WTC11 (cell line): ENCODE measurements at regions of chr2 and their contacts with region 1.

Region 1: DNA sequence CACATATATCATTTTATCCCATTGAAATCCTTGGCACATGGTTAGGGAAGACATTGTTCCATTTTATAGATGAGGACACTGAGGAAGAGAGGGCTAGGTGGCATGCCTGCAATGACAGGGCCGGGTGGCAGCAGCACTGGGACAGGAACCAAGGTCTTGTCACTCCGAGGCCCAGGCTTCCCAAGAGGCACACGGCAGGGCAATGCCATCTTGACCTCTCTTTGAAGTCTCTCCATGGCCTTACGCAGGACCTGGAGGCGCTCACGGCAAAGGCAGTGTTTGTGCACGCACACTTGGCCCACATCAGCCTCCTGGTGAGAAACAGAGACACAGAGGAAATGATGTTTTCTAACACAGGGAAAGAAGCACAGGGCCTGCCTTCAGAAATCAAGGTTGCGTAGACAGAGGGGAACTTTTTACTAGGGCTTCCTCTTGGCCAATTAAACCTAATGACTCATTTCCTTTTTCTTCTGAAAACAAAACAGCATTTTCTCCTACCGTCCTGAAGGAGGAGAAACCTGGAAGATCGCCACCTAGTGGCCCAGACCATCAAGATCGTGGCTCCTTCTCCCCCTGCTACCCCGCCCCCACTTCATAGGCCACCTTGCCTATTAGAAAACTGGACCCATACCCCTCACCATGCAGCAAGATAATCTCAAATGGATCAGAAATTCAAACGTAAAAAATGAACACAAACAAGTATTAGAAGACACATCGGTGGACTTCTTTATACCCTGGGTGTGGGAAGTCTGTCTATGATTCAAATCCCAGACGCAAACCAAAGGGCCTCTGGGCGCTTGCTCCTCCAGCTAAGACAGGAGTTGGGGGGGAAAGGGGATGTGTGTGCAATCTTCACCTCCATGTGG is 74.6 kb upstream of the SP3 start:
- DNase-seq: peak; percentile 88
- ATAC-seq: peak; percentile 88
- H3K4me3 Mint-ChIP-seq: no peak overlapping the region
- H3K27ac Mint-ChIP-seq: peak overlapping the region; percentile 95
- H3K4me1 Mint-ChIP-seq: peaks cover 36% of the 10 kb centered on the region
- H3K27me3 Mint-ChIP-seq: peaks cover 3% of the 10 kb centered on the region
- CTCF ChIP-seq: peak; percentile 78

Region 2: GRCh38 chr2:174051741-174052583 is 12.2 kb after region 1 on chr2:
- CTCF ChIA-PET with region 1: interaction called, 13 read pairs
- POLR2A ChIA-PET with region 1: no interaction called
- DNase-seq: no peak
- ATAC-seq: peak; percentile 53
- H3K4me3 Mint-ChIP-seq: no peak overlapping the region
- H3K27ac Mint-ChIP-seq: no peak overlapping the region; the same call in 1 of the 2 replicates
- H3K4me1 Mint-ChIP-seq: peaks cover 44% of the 10 kb centered on the region
- H3K27me3 Mint-ChIP-seq: no peaks in the 10 kb centered on the region; the same call in 1 of the 2 replicates
- CTCF ChIP-seq: no peak